ENCODE measurements at regions of chr1 and their contacts with region 1.

Region 1: DNA sequence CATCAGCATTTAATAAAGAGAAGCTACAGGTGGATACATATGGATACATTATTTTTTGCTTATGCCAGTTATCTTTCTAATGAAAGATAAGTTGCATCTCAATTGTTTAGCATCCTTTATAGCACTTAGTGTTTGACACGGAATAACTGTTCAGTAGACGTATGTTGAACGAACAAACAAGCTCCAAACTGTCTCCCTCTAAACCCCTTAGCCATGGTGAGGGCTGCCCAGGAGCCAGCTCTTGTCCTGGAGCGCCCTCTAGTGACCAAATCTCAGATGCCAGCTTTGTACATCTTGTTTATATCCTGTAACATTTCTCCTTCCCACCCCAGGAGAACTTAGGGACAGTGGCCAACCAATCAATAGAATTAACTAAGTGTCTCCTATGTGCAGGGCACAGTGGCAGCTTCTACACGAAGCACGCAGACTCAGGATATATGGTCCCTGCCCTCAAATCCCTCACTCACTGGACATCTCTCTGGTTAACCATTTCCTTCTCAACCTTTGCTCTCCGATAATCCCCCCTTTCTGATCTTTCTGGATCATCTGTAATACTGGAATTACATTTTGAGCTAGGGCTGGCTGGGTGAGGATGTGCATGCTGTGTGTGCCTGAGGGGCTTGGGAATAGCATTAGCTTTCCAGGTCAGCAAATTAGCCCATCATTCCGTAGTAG is 22.9 kb downstream of the KCNA10 start:
- DNase-seq: peak; percentile 68
- ATAC-seq: peak; percentile 94
- H3K4me3 ChIP-seq: no peak overlapping the region
- H3K27ac ChIP-seq: no peak overlapping the region
- H3K4me1 ChIP-seq: no peaks in the 10 kb centered on the region; a peak in 1 of 4 replicates
- H3K27me3 ChIP-seq: no peaks in the 10 kb centered on the region
- CTCF ChIP-seq: peak; percentile 87 to 97 (median 95)
- POLR2A ChIP-seq: no peak
- RAD21 ChIP-seq: peak; percentile 99

Region 2: DNA sequence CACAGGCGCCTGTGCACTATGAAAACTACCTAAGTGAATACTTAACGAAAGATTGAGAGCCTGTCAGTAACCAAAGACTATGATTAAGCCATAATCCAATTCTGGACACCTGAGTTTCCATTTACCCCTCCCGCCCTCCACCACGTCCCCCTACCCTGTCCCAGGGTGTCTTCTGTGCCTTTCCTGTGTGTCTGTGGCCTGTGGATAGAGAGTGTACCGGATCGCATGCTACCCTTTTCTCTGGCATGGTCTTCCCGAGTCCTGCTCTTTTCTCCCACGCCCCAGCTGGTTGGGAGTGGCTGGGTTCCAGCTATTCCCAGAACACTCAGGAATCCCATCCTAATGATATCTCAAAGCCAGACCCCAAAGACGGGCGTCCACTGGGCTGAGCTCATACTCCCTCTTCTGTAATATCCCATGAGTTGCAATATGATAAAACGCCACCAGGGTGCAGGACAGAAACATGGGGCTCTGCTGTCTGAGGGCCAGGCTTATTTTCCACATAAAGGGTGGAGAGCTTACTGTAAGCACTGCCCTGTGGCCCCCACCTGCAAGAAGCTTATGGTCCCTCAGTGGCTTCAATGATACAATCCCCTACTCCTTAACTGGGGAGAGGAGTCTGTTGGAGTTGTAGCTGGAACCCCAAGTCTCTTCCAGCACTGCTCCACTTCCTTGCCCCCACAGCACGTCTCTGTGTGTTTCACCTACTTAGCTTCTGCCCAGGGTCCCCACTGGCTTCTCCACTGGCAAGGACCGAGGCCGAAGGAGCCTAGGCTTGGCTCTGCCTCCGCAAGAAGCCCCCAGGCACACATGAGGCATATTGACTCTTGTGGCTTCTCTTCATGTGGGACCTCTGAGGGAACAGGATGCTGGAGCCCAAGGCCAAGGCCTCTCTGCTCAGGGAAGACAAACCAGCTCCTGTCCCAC is 408.0 kb before region 1 on chr1:
- CTCF ChIA-PET with region 1: interaction called, 12 read pairs
- POLR2A ChIA-PET with region 1: no interaction called
- RAD21 ChIA-PET with region 1: no interaction called
- intact Hi-C with region 1: no loop called
- DNase-seq: peak; percentile 31
- ATAC-seq: peak; percentile 98
- H3K4me3 ChIP-seq: no peak overlapping the region
- H3K27ac ChIP-seq: no peak overlapping the region
- H3K4me1 ChIP-seq: no peaks in the 10 kb centered on the region
- H3K27me3 ChIP-seq: peaks cover 9% of the 10 kb centered on the region; the same call in 1 of the 2 replicates
- CTCF ChIP-seq: peak; percentile 58 to 74 (median 70)
- POLR2A ChIP-seq: no peak
- RAD21 ChIP-seq: peak; percentile 67

Region 3: GRCh38 chr1:110203021-110203661 is 292.9 kb before region 1 on chr1:
- CTCF ChIA-PET with region 1: interaction called, 91 read pairs
- POLR2A ChIA-PET with region 1: interaction called, 9 read pairs
- RAD21 ChIA-PET with region 1: interaction called, 14 to 17 read pairs
- intact Hi-C with region 1: loop called (anchors 1 kb)
- DNase-seq: peak; percentile 55
- ATAC-seq: peak; percentile 71
- H3K4me3 ChIP-seq: no peak overlapping the region
- H3K27ac ChIP-seq: 0 out of 2 replicates have a peak overlapping the region, but pooled peaks have one; percentile 3
- H3K4me1 ChIP-seq: peaks cover 0 to 15% of the 10 kb centered on the region in 2 experiments; a peak in 2 of 4 replicates
- H3K27me3 ChIP-seq: no peaks in the 10 kb centered on the region
- CTCF ChIP-seq: peak; percentile 75 to 89 (median 88)
- POLR2A ChIP-seq: no peak
- RAD21 ChIP-seq: peak; percentile 93

Region 4: GRCh38 chr1:110312188-110313121 is 183.6 kb before region 1 on chr1:
- CTCF ChIA-PET with region 1: interaction called, 15 read pairs
- POLR2A ChIA-PET with region 1: no interaction called
- RAD21 ChIA-PET with region 1: interaction called in 1 of 2 experiments, 3 read pairs
- intact Hi-C with region 1: loop called (anchors 1 kb)
- DNase-seq: peak; percentile 54
- ATAC-seq: peak; percentile 99
- H3K4me3 ChIP-seq: no peak overlapping the region
- H3K27ac ChIP-seq: no peak overlapping the region
- H3K4me1 ChIP-seq: peaks cover 2 to 20% of the 10 kb centered on the region in 2 experiments; a peak in 2 of 4 replicates
- H3K27me3 ChIP-seq: no peaks in the 10 kb centered on the region
- CTCF ChIP-seq: peak; percentile 93 to 97 (median 93)
- POLR2A ChIP-seq: no peak
- RAD21 ChIP-seq: peak; percentile 99

Region 5: GRCh38 chr1:110412576-110412975 is 83.5 kb before region 1 on chr1:
- CTCF ChIA-PET with region 1: interaction called, 22 read pairs
- POLR2A ChIA-PET with region 1: interaction called, 5 read pairs
- RAD21 ChIA-PET with region 1: interaction called, 3 to 4 read pairs
- intact Hi-C with region 1: loop called (anchors 1 kb)
- DNase-seq: peak; percentile 54
- ATAC-seq: peak; percentile 78
- H3K4me3 ChIP-seq: no peak overlapping the region
- H3K27ac ChIP-seq: no peak overlapping the region
- H3K4me1 ChIP-seq: peaks cover 4 to 8% of the 10 kb centered on the region in 2 experiments; a peak in 3 of 4 replicates
- H3K27me3 ChIP-seq: no peaks in the 10 kb centered on the region
- CTCF ChIP-seq: peak; percentile 83 to 85 (median 84)
- POLR2A ChIP-seq: no peak
- RAD21 ChIP-seq: peak; percentile 94

Region 6: GRCh38 chr1:110477041-110477440 is 19.0 kb before region 1 on chr1:
- CTCF ChIA-PET with region 1: interaction called, 203 read pairs
- POLR2A ChIA-PET with region 1: no interaction called
- RAD21 ChIA-PET with region 1: interaction called, 8 to 11 read pairs
- intact Hi-C with region 1: loop called (anchors 1 kb)
- DNase-seq: peak; percentile 90
- ATAC-seq: peak; percentile 75
- H3K4me3 ChIP-seq: peak overlapping the region in 1 of 2 experiments; percentile 34; a peak in 2 of 4 replicates
- H3K27ac ChIP-seq: peak overlapping the region; percentile 72
- H3K4me1 ChIP-seq: peaks cover 23 to 40% of the 10 kb centered on the region in 2 experiments
- H3K27me3 ChIP-seq: no peaks in the 10 kb centered on the region
- CTCF ChIP-seq: no peak
- POLR2A ChIP-seq: no peak
- RAD21 ChIP-seq: no peak

Region 7: DNA sequence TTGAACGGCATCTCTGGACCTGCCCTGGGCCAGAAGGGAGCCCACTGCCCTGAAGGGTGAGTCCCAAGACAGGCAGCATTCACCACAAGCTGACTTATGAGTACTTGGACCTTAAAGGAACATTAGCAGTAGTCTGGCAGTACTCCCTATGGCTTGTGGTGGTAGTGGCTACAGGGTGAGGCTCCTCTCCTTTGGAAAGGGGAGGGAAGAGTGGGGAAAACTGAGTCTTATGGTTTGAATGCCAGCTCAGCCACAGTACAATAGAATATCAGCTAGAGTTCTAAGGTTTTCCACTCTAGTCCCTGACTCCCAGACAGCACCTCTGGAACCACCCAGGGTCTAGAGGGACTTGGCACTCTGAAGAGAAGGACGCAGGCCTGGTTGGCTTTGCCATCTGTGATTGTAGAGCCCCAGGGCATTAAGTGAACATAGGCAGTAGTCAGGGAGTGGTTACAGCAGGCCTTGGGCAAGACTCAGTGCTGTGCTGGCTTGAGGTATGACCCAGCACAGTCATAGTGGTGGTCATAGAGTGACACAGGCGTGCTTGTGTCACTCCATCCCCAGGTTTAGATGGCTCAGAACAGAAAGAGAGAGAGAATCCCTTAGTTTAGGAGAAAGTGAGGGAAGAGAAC is 407.9 kb after region 1 on chr1:
- CTCF ChIA-PET with region 1: no interaction called
- POLR2A ChIA-PET with region 1: no interaction called
- RAD21 ChIA-PET with region 1: no interaction called
- intact Hi-C with region 1: no loop called
- DNase-seq: no peak
- ATAC-seq: no peak
- H3K4me3 ChIP-seq: no peak overlapping the region
- H3K27ac ChIP-seq: no peak overlapping the region
- H3K4me1 ChIP-seq: no peaks in the 10 kb centered on the region
- H3K27me3 ChIP-seq: peaks cover 6% of the 10 kb centered on the region; the same call in 1 of the 2 replicates
- CTCF ChIP-seq: no peak
- POLR2A ChIP-seq: no peak
- RAD21 ChIP-seq: no peak